Esophagus muscularis mucosa (tissue), 4 donors: ENCODE measurements at regions of chr2 and their contacts with region 1.

Region 1: DNA sequence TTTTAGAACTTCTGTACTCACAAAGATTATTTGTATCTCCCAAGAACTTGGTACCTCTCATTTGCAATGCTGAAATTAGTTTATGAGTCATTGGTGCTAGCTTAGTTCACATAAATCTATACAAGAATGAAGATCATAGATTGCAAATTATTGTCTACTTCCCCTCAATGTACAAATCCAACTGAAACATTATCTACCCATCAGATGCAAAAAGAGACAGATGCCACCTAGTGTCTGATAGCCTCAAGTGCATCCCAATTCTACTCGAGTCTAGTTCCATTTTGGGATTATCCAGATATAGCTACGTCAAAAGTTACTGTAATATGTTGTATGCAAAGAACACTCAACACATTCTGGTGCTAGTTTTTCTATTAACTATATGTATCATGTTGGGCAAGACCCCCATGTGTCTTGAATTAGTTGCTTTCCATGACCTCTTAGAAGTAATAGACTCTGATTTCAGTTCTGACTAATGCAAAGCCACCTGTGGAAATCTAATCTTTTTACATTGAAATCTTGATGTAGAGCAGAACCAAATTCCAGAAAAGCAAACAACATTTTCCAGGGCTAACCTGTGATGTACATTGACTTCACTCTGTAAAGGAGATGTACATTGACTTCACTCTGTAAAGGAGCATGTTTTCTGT is 210.0 kb downstream of the RBM43 start:
- DNase-seq: no peak
- H3K4me3 ChIP-seq: no peak overlapping the region
- H3K27ac ChIP-seq: no peak overlapping the region
- H3K4me1 ChIP-seq: peaks cover 0 to 14% (median 0%) of the 10 kb centered on the region in 4 donors
- H3K27me3 ChIP-seq: no peaks in the 10 kb centered on the region
- CTCF ChIP-seq: peak; percentile 70 to 88 (median 80)
- EP300 ChIP-seq: no peak
- POLR2A ChIP-seq: no peak

Region 2: GRCh38 chr2:150624001-150624401 is 427.7 kb before region 1 on chr2:
- intact Hi-C with region 1: loop called (anchors 10 kb)
- DNase-seq: no peak
- H3K4me3 ChIP-seq: no peak overlapping the region
- H3K27ac ChIP-seq: no peak overlapping the region
- H3K4me1 ChIP-seq: peaks cover 24 to 39% (median 33%) of the 10 kb centered on the region in 4 donors
- H3K27me3 ChIP-seq: no peaks in the 10 kb centered on the region
- CTCF ChIP-seq: no peak
- EP300 ChIP-seq: no peak
- POLR2A ChIP-seq: no peak